ENCODE measurements at regions of chr2 and their contacts with region 1.

Region 1: GRCh38 chr2:68441179-68441993 is 25.7 kb downstream of the FBXO48 start:
- DNase-seq: no peak
- H3K4me3 ChIP-seq: no peak overlapping the region
- H3K27me3 ChIP-seq: peaks cover 5% of the 10 kb centered on the region; the same call in 1 of the 2 replicates
- CTCF ChIP-seq: peak; percentile 86

Region 2: DNA sequence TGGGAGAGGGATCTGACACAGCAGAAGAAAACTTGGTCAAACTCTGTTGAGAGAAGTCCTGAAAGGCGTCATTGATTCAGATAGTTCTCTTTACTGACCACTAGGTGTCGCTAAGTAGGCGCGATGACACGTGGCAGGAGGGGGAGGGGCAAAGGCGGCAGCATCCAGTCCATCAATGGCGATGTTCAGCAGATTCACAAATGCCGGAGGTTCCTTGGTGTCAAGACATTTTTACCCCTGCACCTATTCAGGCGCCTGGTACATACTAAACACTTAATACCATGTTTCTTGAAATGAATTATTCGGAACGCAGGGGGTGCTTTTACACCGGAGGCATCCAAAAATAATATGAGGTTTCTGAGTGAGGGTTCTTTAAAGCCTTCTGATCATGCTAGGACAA is 79.3 kb before region 1 on chr2:
- CTCF ChIA-PET with region 1: interaction called, 11 read pairs
- POLR2A ChIA-PET with region 1: no interaction called
- DNase-seq: no peak
- H3K4me3 ChIP-seq: no peak overlapping the region
- H3K27me3 ChIP-seq: no peaks in the 10 kb centered on the region
- CTCF ChIP-seq: peak; percentile 57

Region 3: GRCh38 chr2:68385220-68385906 is 56.0 kb before region 1 on chr2:
- CTCF ChIA-PET with region 1: no interaction called
- POLR2A ChIA-PET with region 1: no interaction called
- DNase-seq: no peak
- H3K4me3 ChIP-seq: no peak overlapping the region
- H3K27me3 ChIP-seq: peaks cover 12% of the 10 kb centered on the region
- CTCF ChIP-seq: no peak